Activated CD4-positive, alpha-beta memory T cell treated with anti-CD3 and anti-CD28 coated beads, Interleukin-2, amount 10 ng/mL, durations not matched to agents 7 days and 5 days (primary cell): ENCODE measurements at regions of chr22 and their contacts with region 1.

Region 1: GRCh38 chr22:49305214-49305909 is 522.3 kb downstream of the BRD1 start:
- DNase-seq: peak; percentile 58
- H3K4me3 Mint-ChIP-seq: no peak overlapping the region
- H3K27ac Mint-ChIP-seq: no peak overlapping the region
- H3K4me1 Mint-ChIP-seq: no peaks in the 10 kb centered on the region
- H3K27me3 Mint-ChIP-seq: peaks cover 8% of the 10 kb centered on the region

Region 2: GRCh38 chr22:49046546-49047361 is 258.6 kb before region 1 on chr22:
- CTCF ChIA-PET with region 1: interaction called, 15 read pairs
- POLR2A ChIA-PET with region 1: no interaction called
- DNase-seq: peak; percentile 22
- H3K4me3 Mint-ChIP-seq: no peak overlapping the region
- H3K27ac Mint-ChIP-seq: no peak overlapping the region
- H3K4me1 Mint-ChIP-seq: no peaks in the 10 kb centered on the region
- H3K27me3 Mint-ChIP-seq: no peaks in the 10 kb centered on the region

Region 3: GRCh38 chr22:49362211-49362839 is 57.0 kb after region 1 on chr22:
- CTCF ChIA-PET with region 1: no interaction called
- POLR2A ChIA-PET with region 1: no interaction called
- DNase-seq: peak; percentile 9
- H3K4me3 Mint-ChIP-seq: no peak overlapping the region
- H3K27ac Mint-ChIP-seq: no peak overlapping the region
- H3K4me1 Mint-ChIP-seq: no peaks in the 10 kb centered on the region
- H3K27me3 Mint-ChIP-seq: peaks cover 12% of the 10 kb centered on the region

Region 4: GRCh38 chr22:49415151-49415951 is 110.0 kb after region 1 on chr22:
- CTCF ChIA-PET with region 1: no interaction called
- POLR2A ChIA-PET with region 1: no interaction called
- DNase-seq: no peak
- H3K4me3 Mint-ChIP-seq: no peak overlapping the region
- H3K27ac Mint-ChIP-seq: no peak overlapping the region
- H3K4me1 Mint-ChIP-seq: no peaks in the 10 kb centered on the region
- H3K27me3 Mint-ChIP-seq: no peaks in the 10 kb centered on the region